PC-3 (cell line): ENCODE measurements at regions of chr2 and their contacts with region 1.

Region 1: DNA sequence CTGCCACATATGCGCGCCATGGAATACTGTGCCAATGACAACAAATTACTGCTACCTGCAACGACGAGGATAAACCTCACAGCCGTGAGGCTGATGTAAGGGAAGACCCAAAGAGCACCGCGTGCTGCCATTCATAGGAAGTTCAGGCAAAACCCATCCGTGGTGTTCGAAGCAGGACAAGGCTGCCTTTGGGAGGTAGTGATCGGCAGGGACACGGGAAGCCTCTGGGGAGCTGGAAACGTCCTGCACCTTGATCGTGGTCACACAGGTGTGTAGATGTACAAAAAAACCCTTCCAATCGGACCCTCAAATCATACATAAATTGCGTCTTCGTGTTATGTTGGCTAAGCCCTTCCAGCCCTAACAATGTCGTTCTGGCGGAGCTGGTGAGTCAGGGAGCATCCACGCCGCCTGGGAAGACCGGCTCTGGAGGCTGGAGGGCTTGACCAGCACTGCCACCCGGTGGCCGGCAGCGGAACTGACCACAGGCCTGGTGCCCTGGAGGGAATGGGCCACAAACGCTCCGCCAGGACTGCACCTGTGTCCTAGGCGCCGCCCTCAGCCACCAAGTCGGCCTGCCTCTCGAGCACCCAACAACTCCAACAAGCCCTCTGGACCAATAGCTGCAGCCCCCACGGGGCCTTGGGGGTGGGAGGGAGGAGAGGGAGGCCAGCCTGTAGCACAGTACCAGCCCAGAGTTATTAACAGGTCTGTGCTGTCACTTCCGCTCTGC is 4.1 kb upstream of the NEURL3 start:
- DNase-seq: peak; percentile 93
- ATAC-seq: peak; percentile 77
- H3K4me3 ChIP-seq: no peak overlapping the region
- H3K27ac ChIP-seq: no peak overlapping the region
- H3K4me1 ChIP-seq: peaks cover 27% of the 10 kb centered on the region
- H3K27me3 ChIP-seq: no peaks in the 10 kb centered on the region
- CTCF ChIP-seq: peak; percentile 94

Region 2: DNA sequence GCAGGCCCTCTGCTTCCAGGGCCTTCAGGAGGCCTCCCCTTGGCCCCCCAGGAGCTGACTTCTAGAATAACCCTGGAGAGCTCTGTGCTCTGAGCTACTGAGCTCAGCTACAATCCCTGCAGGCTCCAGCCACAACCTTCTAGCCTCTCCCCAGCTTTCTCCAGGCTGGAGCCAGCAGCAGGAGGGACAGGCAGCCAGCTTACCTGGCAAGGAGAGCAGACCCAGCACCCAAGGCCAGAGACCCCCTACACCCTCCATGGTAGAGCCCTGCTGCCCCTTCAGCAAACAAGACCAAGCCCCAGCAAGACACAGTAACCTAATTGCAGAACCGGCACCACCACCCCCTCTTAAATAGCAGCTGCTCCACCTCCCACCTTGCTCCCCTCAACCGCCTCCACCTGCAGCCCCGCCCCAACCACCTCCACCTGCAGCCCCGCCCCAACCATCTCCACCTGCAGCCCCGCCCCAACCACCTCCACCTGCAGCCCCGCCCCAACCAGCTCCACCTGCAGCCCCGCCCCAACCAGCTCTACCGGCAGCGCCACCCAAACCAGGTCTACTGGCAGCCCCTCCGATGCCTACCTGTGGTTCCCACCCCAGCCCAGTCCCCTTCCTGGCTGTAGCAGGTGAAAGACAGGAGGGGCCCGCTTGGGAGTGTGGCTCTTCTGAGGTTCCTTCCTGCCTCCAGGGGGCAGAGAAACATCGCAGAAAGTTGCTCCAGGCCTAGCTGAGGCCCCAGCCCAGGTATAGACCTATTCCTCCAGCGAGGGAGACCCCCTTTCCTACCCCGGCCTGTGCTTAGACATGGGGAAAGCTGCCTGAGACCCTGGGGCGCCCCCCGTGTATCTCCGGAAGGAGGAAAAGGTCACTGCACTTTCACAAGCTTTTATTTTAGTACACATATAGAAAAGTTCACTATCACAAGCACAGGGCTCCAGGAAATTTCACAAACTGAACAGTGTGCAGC is 370.8 kb before region 1 on chr2 and contains the start of gene ASTL:
- CTCF ChIA-PET with region 1: no interaction called
- POLR2A ChIA-PET with region 1: no interaction called
- intact Hi-C with region 1: loop called (anchors 1 kb)
- DNase-seq: peak; percentile 64
- ATAC-seq: peak; percentile 86
- H3K4me3 ChIP-seq: no peak within 1 kb of the TSS; the same call in 1 of the 2 replicates
- H3K27ac ChIP-seq: no peak within 1 kb of the TSS
- H3K4me1 ChIP-seq: peaks cover 5% of the 10 kb centered on the region; the same call in 1 of the 2 replicates
- H3K27me3 ChIP-seq: no peaks in the 10 kb centered on the region
- CTCF ChIP-seq: peak; percentile 70
- total RNA-seq, gene ASTL: not detected in 2 replicates

Region 3: GRCh38 chr2:96359310-96359709 is 150.0 kb before region 1 on chr2:
- CTCF ChIA-PET with region 1: no interaction called
- POLR2A ChIA-PET with region 1: no interaction called
- intact Hi-C with region 1: loop called (anchors 1 kb)
- DNase-seq: peak; percentile 20
- ATAC-seq: no peak
- H3K4me3 ChIP-seq: no peak overlapping the region
- H3K27ac ChIP-seq: no peak overlapping the region
- H3K4me1 ChIP-seq: no peaks in the 10 kb centered on the region
- H3K27me3 ChIP-seq: no peaks in the 10 kb centered on the region
- CTCF ChIP-seq: peak; percentile 53

Region 4: DNA sequence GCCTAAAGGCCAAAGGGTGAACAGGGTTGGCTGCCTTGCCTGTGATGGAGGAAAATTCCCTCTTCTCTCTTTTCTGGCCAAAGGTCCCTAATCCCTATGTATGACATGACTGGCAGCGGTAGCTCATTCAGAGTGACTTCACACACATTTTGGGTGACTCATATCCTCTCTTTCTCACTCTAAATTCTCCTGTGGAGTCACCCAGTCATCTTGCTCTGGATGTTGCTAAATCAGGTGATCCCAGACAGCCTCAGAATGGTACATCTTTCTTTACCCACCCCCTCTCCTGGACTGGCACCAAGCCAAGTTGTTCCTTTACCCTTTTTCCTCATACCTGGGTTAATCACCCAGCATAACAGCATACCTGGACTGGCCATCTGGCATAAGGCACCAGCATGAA is 81.4 kb before region 1 on chr2:
- CTCF ChIA-PET with region 1: no interaction called
- POLR2A ChIA-PET with region 1: no interaction called
- intact Hi-C with region 1: loop called (anchors 1 kb)
- DNase-seq: peak; percentile 98
- ATAC-seq: peak; percentile 98
- H3K4me3 ChIP-seq: no peak overlapping the region
- H3K27ac ChIP-seq: peak overlapping the region; percentile 67
- H3K4me1 ChIP-seq: peaks cover 28% of the 10 kb centered on the region
- H3K27me3 ChIP-seq: no peaks in the 10 kb centered on the region
- CTCF ChIP-seq: no peak

Region 5: GRCh38 chr2:96554293-96555145 is 45.2 kb after region 1 on chr2:
- CTCF ChIA-PET with region 1: interaction called, 4 read pairs
- POLR2A ChIA-PET with region 1: no interaction called
- intact Hi-C with region 1: loop called (anchors 1 kb)
- DNase-seq: peak; percentile 64
- ATAC-seq: peak; percentile 28
- H3K4me3 ChIP-seq: no peak overlapping the region
- H3K27ac ChIP-seq: no peak overlapping the region
- H3K4me1 ChIP-seq: peaks cover 27% of the 10 kb centered on the region
- H3K27me3 ChIP-seq: no peaks in the 10 kb centered on the region
- CTCF ChIP-seq: peak; percentile 93

Region 6: GRCh38 chr2:96565111-96565510 is 55.8 kb after region 1 on chr2:
- CTCF ChIA-PET with region 1: no interaction called
- POLR2A ChIA-PET with region 1: no interaction called
- intact Hi-C with region 1: no loop called
- DNase-seq: no peak
- ATAC-seq: no peak
- H3K4me3 ChIP-seq: no peak overlapping the region
- H3K27ac ChIP-seq: no peak overlapping the region
- H3K4me1 ChIP-seq: no peaks in the 10 kb centered on the region
- H3K27me3 ChIP-seq: no peaks in the 10 kb centered on the region
- CTCF ChIP-seq: no peak